Right ventricle myocardium superior (tissue), 1 donor: ENCODE measurements at regions of chr17 and their contacts with region 1.

Region 1: DNA sequence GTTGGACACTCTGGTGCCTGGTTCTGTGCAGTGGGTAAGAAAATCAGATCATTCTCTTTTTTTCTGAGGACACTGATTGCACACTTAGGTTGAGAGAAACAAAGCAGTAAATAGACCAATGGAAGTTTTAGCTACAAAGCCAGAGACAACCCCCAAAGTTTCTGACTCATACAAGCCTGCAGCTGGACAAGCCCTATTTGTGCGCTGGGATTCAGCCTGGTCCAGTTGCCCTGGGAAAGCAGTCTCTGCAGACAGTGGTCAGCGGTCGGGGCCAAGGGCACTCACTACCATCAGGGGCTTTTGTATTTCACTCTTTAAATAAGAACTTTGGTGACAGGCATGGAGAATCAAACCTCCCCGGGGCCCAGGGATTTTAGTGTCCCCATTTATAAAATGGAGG is 6.0 kb upstream of the RHBDL3 start:
- DNase-seq: no peak
- ATAC-seq: no peak

Region 2: DNA sequence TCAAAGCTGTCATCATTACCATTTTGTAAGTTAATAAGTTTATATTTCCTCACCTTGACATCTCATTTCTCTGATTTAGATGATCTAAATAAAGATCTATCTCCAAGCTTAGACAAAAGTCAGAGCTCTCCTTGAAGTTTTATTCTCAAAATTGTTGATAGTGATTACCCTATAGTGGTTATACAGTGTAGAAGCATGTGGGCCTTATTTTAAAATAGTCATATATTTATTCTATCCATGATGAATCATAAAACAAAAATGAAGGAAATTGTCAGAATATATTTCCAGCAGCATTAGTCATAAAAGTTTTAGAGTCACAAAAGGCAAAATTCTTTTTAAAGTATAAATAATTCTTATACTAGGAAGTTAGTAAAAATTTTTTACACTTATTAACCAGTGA is 68.3 kb before region 1 on chr17:
- intact Hi-C with region 1: no loop called
- DNase-seq: no peak
- ATAC-seq: no peak

Region 3: GRCh38 chr17:32307658-32308057 is 48.1 kb after region 1 on chr17:
- intact Hi-C with region 1: loop called (anchors 2 kb)
- DNase-seq: no peak
- ATAC-seq: no peak